Endothelial cell of umbilical vein (primary cell): ENCODE measurements at regions of chr14 and their contacts with region 1.

Region 1: GRCh38 chr14:64294672-64295413 is 672 bp upstream of the ESR2 start:
- DNase-seq: peak; percentile 65
- H3K4me3 ChIP-seq: peak overlapping the region; percentile 5 to 50 (median 24)
- H3K27ac ChIP-seq: no peak overlapping the region
- H3K4me1 ChIP-seq: peaks cover 32% of the 10 kb centered on the region
- H3K27me3 ChIP-seq: peaks cover 2 to 3% of the 10 kb centered on the region in 2 experiments
- CTCF ChIP-seq: peak; percentile 88 to 95
- POLR2A ChIP-seq: no peak

Region 2: GRCh38 chr14:63800651-63801375 is 494.0 kb before region 1 on chr14:
- CTCF ChIA-PET with region 1: interaction called, 33 read pairs
- POLR2A ChIA-PET with region 1: no interaction called
- dilution Hi-C with region 1: no loop called
- intact Hi-C with region 1: loop called (anchors 1 kb)
- DNase-seq: no peak
- H3K4me3 ChIP-seq: no peak overlapping the region
- H3K27ac ChIP-seq: no peak overlapping the region
- H3K4me1 ChIP-seq: peaks cover 2% of the 10 kb centered on the region
- H3K27me3 ChIP-seq: no peaks in the 10 kb centered on the region
- CTCF ChIP-seq: no peak
- POLR2A ChIP-seq: no peak

Region 3: GRCh38 chr14:64005822-64006221 is 289.0 kb before region 1 on chr14:
- CTCF ChIA-PET with region 1: interaction called, 71 read pairs
- POLR2A ChIA-PET with region 1: no interaction called
- dilution Hi-C with region 1: no loop called
- intact Hi-C with region 1: loop called (anchors 2 kb)
- DNase-seq: no peak
- H3K4me3 ChIP-seq: no peak overlapping the region
- H3K27ac ChIP-seq: no peak overlapping the region
- H3K4me1 ChIP-seq: no peaks in the 10 kb centered on the region
- H3K27me3 ChIP-seq: no peaks in the 10 kb centered on the region
- CTCF ChIP-seq: no peak
- POLR2A ChIP-seq: no peak

Region 4: DNA sequence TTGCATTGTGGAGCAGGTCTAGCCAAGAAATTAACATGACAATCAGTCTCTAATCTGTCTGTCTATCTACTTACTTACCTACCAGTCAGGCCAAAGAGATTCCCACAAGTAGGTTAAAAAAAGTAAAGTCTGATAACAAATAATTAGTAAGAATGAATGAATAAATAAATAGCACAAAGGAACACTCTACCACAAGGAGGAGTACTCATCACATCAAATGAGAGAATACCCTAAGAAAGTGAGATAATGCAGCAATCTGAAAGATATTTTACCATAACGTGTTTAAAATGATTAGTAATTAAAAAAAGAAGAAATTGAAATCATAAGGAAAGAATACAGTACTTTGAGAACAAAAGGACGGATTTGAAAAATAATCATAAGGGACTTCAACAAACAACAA is 254.8 kb before region 1 on chr14:
- CTCF ChIA-PET with region 1: interaction called, 16 read pairs
- POLR2A ChIA-PET with region 1: no interaction called
- dilution Hi-C with region 1: no loop called
- intact Hi-C with region 1: loop called (anchors 2 kb)
- DNase-seq: peak; percentile 28
- H3K4me3 ChIP-seq: no peak overlapping the region
- H3K27ac ChIP-seq: no peak overlapping the region
- H3K4me1 ChIP-seq: no peaks in the 10 kb centered on the region
- H3K27me3 ChIP-seq: no peaks in the 10 kb centered on the region
- CTCF ChIP-seq: peak in 1 of 2 donors; percentile 9
- POLR2A ChIP-seq: no peak

Region 5: GRCh38 chr14:64137657-64138290 is 157.1 kb before region 1 on chr14:
- CTCF ChIA-PET with region 1: interaction called, 30 read pairs
- POLR2A ChIA-PET with region 1: no interaction called
- dilution Hi-C with region 1: no loop called
- intact Hi-C with region 1: loop called (anchors 1 kb)
- DNase-seq: peak; percentile 20
- H3K4me3 ChIP-seq: no peak overlapping the region
- H3K27ac ChIP-seq: no peak overlapping the region
- H3K4me1 ChIP-seq: no peaks in the 10 kb centered on the region
- H3K27me3 ChIP-seq: no peaks in the 10 kb centered on the region
- CTCF ChIP-seq: peak in 1 of 2 donors; percentile 22
- POLR2A ChIP-seq: no peak

Region 6: DNA sequence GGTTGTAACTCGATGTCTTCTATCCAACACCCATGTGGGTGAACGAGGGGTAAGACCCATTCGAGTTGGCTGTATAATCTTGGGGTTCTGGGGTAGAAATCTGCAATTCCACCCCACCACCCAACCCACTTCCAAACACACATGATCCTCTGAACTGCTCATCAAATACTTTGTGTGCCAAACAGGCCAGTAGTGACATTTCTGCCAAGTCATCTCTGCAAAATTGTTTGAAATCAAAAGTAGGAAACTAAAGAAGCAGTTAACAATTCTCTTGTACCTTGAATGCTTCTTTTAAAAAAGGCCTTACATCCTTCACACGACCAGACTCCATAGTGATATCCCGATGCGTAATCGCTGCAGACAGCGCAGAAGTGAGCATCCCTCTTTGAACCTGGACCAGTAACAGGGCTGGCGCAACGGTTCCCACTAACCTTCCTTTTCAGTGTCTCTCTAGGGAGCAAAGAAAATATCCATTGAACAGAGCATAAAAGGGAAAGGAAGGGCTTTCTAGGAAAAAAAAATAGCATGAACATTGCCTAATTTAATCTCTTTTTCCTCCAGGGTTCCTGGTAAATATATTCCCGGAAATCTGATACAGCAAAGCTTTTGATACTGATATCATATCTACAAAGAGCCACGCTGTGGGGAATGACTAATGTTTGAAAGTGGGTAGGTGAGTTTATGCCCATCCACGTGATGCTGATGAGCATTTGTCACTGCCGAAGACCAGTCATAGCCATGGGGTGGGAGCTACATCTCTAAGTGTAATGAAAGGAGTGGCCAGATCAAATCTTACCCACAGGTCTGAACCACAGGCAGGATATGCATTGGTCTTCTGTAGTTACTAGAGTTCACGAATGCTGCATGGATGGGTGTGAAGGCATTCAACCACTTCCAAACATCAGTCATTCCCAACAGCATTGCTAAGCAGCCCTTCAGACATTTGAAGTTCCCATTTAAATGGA is 14.9 kb before region 1 on chr14:
- CTCF ChIA-PET with region 1: interaction called, 20 read pairs
- POLR2A ChIA-PET with region 1: no interaction called
- dilution Hi-C with region 1: no loop called
- intact Hi-C with region 1: no loop called
- DNase-seq: peak; percentile 92
- H3K4me3 ChIP-seq: no peak overlapping the region
- H3K27ac ChIP-seq: no peak overlapping the region
- H3K4me1 ChIP-seq: peaks cover 22% of the 10 kb centered on the region
- H3K27me3 ChIP-seq: no peaks in the 10 kb centered on the region
- CTCF ChIP-seq: no peak
- POLR2A ChIP-seq: peak; percentile 55

Region 7: DNA sequence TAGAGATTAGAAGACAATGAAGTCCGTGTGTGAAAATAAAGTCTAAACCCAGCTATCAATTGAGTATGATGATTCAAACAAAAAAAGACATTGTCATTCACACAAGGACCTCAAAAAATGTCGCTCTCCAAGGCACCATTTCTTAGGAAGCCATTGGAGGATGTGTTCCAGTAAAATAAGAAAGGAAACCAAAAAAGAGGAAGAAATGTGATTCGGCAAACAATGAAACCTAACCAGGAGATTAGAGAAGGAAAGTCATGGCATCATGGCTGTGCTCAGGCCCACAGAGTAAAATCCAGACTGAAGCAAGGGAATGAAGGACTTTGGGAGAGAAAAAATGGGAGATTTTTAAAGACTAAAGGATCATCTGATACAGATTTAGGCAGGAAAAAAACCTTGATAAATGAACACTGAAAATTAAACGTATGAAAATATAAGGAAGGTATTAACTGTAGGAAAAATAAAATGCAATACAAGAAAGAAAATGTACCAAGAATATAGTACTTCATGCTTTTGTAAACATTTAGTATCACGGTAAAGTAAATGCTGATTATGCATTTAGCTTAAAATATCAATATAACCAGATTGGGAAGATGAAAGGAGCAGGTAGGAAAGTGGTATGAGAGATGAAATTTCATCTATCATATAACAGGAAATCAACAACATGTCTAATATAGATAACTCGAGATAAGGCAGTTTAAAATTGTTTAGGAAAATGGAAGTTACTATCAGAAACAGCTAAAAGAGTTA is 55.1 kb after region 1 on chr14:
- CTCF ChIA-PET with region 1: no interaction called
- POLR2A ChIA-PET with region 1: no interaction called
- dilution Hi-C with region 1: no loop called
- intact Hi-C with region 1: no loop called
- DNase-seq: no peak
- H3K4me3 ChIP-seq: no peak overlapping the region
- H3K27ac ChIP-seq: no peak overlapping the region
- H3K4me1 ChIP-seq: no peaks in the 10 kb centered on the region
- H3K27me3 ChIP-seq: no peaks in the 10 kb centered on the region
- CTCF ChIP-seq: no peak
- POLR2A ChIP-seq: no peak

Region 8: DNA sequence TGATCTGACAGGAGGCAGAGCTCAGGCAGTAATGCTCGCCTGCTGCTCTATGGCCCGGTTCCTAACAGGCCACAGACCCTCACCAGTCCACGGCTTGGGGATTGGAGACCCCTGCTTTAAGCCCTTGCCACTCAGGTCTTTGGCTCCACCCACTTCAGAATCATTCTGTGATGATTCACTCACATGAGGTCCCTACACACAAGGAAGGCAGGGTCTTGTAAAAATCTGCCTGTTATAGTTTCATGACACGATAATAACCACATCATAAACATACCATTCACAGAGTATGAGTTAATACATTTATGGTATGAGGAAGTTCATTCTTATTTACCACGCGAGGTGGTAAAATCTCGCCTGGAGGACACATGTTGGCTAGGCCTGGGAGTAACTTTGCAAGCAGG is 836.5 kb after region 1 on chr14:
- CTCF ChIA-PET with region 1: no interaction called
- POLR2A ChIA-PET with region 1: no interaction called
- dilution Hi-C with region 1: no loop called
- intact Hi-C with region 1: no loop called
- DNase-seq: no peak
- H3K4me3 ChIP-seq: no peak overlapping the region
- H3K27ac ChIP-seq: no peak overlapping the region
- H3K4me1 ChIP-seq: no peaks in the 10 kb centered on the region
- H3K27me3 ChIP-seq: no peaks in the 10 kb centered on the region
- CTCF ChIP-seq: no peak
- POLR2A ChIP-seq: no peak